ENCODE measurements at regions of chr5 and their contacts with region 1.

Region 1: GRCh38 chr5:174327317-174328236 is 282.1 kb downstream of the NSG2 start:
- DNase-seq: peak; percentile 51
- H3K4me3 ChIP-seq: no peak overlapping the region
- H3K27ac ChIP-seq: no peak overlapping the region
- H3K27me3 ChIP-seq: peaks cover 4% of the 10 kb centered on the region
- CTCF ChIP-seq: peak; percentile 83

Region 2: GRCh38 chr5:174283211-174284005 is 44.2 kb before region 1 on chr5:
- CTCF ChIA-PET with region 1: no interaction called
- POLR2A ChIA-PET with region 1: no interaction called
- DNase-seq: no peak
- H3K4me3 ChIP-seq: no peak overlapping the region
- H3K27ac ChIP-seq: no peak overlapping the region
- H3K27me3 ChIP-seq: no peaks in the 10 kb centered on the region
- CTCF ChIP-seq: no peak

Region 3: GRCh38 chr5:174311531-174312269 is 15.9 kb before region 1 on chr5:
- CTCF ChIA-PET with region 1: interaction called, 52 read pairs
- POLR2A ChIA-PET with region 1: interaction called, 3 read pairs
- DNase-seq: no peak
- H3K4me3 ChIP-seq: peak overlapping the region; percentile 47
- H3K27ac ChIP-seq: no peak overlapping the region
- H3K27me3 ChIP-seq: peaks cover 13% of the 10 kb centered on the region
- CTCF ChIP-seq: peak; percentile 75

Region 4: DNA sequence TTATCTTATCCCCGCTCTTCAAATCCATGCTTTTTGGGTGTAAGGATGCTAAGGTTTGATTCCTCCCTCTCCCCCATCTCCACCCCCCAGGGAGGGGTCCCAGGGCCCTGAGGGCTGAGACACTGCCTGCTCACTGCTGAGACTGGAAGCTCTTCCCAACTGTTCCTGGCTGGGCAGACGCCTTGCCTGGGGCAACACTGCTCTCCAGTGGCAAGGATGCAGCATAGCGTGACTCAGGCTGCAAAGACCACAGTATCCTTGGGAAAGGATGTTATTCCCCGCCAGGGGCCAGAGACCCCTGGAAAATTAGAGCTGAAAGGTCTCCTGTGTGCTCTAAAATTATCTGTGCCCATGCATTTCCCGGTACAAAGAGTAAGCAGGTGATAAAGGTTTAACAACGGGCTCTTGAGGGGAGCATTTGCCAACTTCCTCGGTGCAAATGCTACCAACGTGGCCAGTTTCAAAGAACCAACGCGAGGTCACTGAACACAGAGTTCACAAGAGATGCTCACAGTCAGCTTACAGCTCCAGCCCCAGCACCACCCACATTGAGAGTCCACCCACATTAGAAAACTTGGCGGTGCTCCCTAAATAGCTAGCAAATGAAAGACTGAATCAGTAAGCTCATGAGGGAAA is 10.2 kb before region 1 on chr5:
- CTCF ChIA-PET with region 1: interaction called, 52 read pairs
- POLR2A ChIA-PET with region 1: interaction called, 3 read pairs
- DNase-seq: no peak
- H3K4me3 ChIP-seq: no peak overlapping the region
- H3K27ac ChIP-seq: no peak overlapping the region
- H3K27me3 ChIP-seq: peaks cover 12% of the 10 kb centered on the region
- CTCF ChIP-seq: peak; percentile 95

Region 5: GRCh38 chr5:174563899-174564298 is 236.3 kb after region 1 on chr5:
- CTCF ChIA-PET with region 1: no interaction called
- POLR2A ChIA-PET with region 1: no interaction called
- DNase-seq: no peak
- H3K4me3 ChIP-seq: no peak overlapping the region
- H3K27ac ChIP-seq: peak overlapping the region; percentile 21
- H3K27me3 ChIP-seq: no peaks in the 10 kb centered on the region
- CTCF ChIP-seq: no peak

Region 6: GRCh38 chr5:174793684-174794328 is 466.2 kb after region 1 on chr5:
- CTCF ChIA-PET with region 1: interaction called, 14 read pairs
- POLR2A ChIA-PET with region 1: no interaction called
- DNase-seq: no peak
- H3K4me3 ChIP-seq: no peak overlapping the region
- H3K27ac ChIP-seq: no peak overlapping the region
- H3K27me3 ChIP-seq: peaks cover 9% of the 10 kb centered on the region
- CTCF ChIP-seq: peak; percentile 90

Region 7: GRCh38 chr5:174935854-174936474 is 608.4 kb after region 1 on chr5:
- CTCF ChIA-PET with region 1: interaction called, 10 read pairs
- POLR2A ChIA-PET with region 1: no interaction called
- DNase-seq: peak; percentile 13
- H3K4me3 ChIP-seq: no peak overlapping the region
- H3K27ac ChIP-seq: no peak overlapping the region
- H3K27me3 ChIP-seq: no peaks in the 10 kb centered on the region
- CTCF ChIP-seq: peak; percentile 94